Aorta (tissue), 5 donors: ENCODE measurements at regions of chr14 and their contacts with region 1.

Region 1: DNA sequence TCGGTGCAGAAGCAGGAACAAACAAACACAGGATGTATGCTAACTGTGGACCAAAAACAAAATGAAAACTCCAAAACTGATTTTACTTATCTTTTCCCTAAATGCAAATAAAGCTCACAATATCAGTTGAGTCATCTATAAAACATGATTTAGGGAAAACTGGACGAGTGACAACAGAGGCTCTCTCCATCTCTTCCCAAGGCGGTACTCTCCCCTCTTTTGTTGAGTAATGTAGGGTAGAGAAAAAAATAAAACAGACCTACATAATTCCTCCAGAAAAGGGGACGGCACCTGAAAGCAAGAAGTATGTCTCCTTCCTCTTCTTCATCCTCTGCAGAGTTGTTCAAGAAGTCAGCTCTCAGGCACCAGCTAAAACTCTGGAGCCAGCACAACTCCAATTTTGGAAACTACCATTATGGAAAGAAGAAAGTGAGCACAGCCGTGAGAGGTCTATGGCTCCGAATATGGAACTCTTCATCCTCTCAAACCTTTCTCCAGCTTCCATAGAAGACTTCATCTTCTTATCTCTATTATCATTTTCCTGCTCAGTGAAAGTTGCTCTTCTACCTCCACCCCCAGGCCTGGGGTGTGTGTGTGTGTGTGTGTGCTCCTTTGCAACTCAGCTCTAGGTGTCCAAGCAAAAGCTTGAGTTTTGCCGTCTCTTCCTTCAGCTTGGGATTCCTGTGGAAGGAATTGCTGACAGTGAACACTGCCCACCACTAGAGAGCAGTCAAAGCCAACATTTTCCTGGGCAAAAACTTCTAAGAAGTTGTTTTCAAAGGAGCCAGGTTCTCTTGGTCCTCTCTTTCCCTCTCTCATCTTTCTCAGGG is 155.4 kb downstream of the DIO2 start:
- DNase-seq: peak in 1 of 2 donors; percentile 41
- ATAC-seq: peak; percentile 67
- H3K4me3 ChIP-seq: no peak overlapping the region
- H3K27ac ChIP-seq: no peak overlapping the region
- H3K4me1 ChIP-seq: no peaks in the 10 kb centered on the region
- H3K27me3 ChIP-seq: no peaks in the 10 kb centered on the region

Region 2: GRCh38 chr14:78959674-78960264 is 1096.1 kb before region 1 on chr14:
- intact Hi-C with region 1: loop called in 1 of 2 experiments (anchors 10 kb)
- DNase-seq: peak; percentile 73 to 87
- ATAC-seq: peak; percentile 88
- H3K4me3 ChIP-seq: peak overlapping the region; percentile 49 to 51
- H3K27ac ChIP-seq: no peak overlapping the region
- H3K4me1 ChIP-seq: no peaks in the 10 kb centered on the region
- H3K27me3 ChIP-seq: no peaks in the 10 kb centered on the region

Region 3: GRCh38 chr14:80587075-80587724 is 531.3 kb after region 1 on chr14:
- intact Hi-C with region 1: loop called (anchors 5 kb)
- DNase-seq: no peak
- ATAC-seq: no peak
- H3K4me3 ChIP-seq: no peak overlapping the region
- H3K27ac ChIP-seq: no peak overlapping the region
- H3K4me1 ChIP-seq: no peaks in the 10 kb centered on the region
- H3K27me3 ChIP-seq: no peaks in the 10 kb centered on the region

Region 4: DNA sequence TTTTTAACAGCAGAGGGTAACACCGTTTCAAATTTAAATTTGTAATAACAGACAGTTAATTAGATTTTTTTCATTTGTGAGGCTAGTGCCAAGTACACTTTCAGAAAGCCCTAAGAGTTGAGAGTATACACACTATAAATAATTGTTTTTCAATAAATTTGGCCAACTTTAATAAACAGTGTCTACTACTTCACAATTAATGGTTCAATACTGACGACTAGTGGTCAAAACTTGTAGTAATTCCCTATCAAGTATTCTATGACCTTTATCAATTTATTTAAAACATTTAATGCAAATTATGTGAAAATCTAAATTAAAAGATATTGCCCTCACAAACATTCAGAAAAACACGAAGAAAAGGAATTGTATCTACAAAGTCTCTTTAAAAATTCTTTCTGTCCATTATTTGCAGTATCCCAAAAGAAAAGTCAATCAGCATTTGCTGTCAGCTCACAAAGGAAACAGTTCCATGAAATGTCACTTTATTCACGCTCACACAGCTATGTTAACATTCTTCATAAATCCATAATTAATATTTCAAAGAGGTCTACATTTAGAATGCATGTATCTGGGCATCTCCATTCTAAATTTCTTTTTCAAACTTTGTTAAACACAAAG is 794.4 kb after region 1 on chr14:
- intact Hi-C with region 1: loop called (anchors 5 kb)
- DNase-seq: no peak
- ATAC-seq: no peak
- H3K4me3 ChIP-seq: no peak overlapping the region
- H3K27ac ChIP-seq: no peak overlapping the region
- H3K4me1 ChIP-seq: no peaks in the 10 kb centered on the region
- H3K27me3 ChIP-seq: no peaks in the 10 kb centered on the region